ENCODE measurements at regions of chr16 and their contacts with region 1.

Region 1: DNA sequence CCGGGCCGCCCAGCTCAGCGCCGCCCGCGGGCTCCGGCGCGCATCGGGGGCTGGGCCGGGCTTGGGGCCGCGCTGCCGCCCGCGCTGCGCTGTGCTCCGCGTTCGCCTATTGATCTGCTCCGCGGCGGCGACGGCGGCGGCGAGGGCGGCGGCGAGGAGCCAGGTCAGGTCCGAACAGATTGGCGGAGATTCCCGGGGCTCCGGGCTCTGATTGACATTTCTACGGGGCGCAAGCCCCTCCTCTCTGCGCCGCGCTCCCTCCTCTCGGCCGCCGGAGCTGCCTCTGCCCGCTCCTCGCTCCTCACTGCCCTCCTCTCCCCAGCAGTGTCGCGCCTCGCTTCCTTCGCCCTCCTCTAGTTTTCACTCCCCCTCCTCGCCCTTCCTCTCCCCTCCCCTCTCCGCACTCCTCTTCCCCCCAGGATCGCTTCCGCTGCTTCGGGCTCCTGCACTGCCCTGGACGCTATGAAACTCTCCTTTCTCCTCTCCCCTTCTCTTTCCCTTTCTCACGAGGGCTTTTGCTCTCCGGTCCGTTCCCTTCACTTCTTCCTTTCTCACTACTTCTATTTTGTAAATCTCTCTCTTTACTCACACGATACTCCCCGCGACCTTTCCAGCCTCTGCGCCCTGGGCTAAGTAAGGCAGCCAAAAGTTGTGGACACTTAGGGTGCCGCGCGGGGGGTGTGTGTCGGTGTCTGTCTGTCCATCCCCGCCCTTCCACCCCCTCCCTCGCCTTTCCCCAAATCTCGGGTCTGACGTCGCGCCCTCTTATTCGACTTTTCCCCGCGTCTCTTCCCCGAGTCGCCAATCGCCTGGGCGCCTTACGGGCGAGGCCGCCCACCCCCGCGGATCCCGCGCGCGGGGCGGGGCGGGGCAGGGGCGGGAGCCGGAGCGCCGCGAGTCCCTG is at the start of gene IRX3:
- DNase-seq: no peak
- H3K4me3 ChIP-seq: peak within 1 kb of the TSS; percentile 61 to 67
- H3K27ac ChIP-seq: peak within 1 kb of the TSS; percentile 77
- H3K4me1 ChIP-seq: peaks cover 44% of the 10 kb centered on the region
- H3K27me3 ChIP-seq: peaks cover 5% of the 10 kb centered on the region
- CTCF ChIP-seq: no peak
- POLR2A ChIP-seq: no peak
- total RNA-seq, gene IRX3: 16.5 TPM

Region 2: GRCh38 chr16:53549970-53550690 is 736.2 kb before region 1 on chr16:
- intact Hi-C with region 1: loop called (anchors 10 kb)
- DNase-seq: no peak
- H3K4me3 ChIP-seq: no peak overlapping the region
- H3K27ac ChIP-seq: no peak overlapping the region
- H3K4me1 ChIP-seq: no peaks in the 10 kb centered on the region
- H3K27me3 ChIP-seq: no peaks in the 10 kb centered on the region
- CTCF ChIP-seq: peak; percentile 17 to 53 (median 48)
- POLR2A ChIP-seq: no peak

Region 3: DNA sequence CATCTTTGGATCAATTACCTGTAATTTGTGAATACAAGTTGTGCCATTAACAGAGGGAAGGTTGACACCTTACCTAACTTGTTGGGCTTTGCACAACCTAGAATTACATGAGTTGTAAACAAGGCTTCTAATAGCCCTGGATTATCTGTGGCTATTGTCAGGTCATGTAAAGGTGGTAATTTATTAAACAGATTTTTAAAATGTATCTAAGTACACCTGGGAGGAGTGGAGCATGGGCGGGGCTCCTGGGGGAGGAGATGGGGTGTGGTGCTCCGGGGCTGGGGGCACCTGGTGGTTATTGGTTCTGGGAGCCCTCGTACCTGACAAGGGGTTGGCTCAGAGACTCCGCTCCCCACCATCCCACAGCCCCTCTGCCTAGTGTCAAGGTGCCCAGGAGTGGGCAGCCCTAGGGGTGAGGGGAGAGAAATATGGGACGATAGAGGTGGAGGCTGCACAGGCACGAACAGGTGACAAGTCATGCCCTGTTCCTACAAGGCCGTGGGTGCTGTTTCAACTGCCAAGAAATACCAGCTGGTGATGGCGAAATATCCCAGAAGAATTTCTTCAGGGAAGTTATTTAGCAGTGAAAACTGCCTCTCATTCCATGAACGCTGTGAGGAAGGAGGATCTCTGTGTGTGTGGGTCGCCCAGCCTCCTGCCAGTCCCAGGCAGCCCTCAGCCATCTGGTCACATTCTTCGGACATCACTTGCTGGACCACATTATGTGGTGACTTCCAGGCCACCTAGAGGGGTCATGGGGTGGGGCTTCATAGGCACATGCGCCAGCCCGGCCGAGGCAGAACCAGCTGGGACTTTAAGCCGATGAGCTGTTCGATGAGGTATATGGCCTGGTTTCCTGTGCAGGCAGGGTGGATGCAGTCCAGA is 55.8 kb after region 1 on chr16:
- intact Hi-C with region 1: no loop called
- DNase-seq: no peak
- H3K4me3 ChIP-seq: no peak overlapping the region
- H3K27ac ChIP-seq: no peak overlapping the region
- H3K4me1 ChIP-seq: peaks cover 12% of the 10 kb centered on the region
- H3K27me3 ChIP-seq: no peaks in the 10 kb centered on the region
- CTCF ChIP-seq: no peak
- POLR2A ChIP-seq: no peak

Region 4: DNA sequence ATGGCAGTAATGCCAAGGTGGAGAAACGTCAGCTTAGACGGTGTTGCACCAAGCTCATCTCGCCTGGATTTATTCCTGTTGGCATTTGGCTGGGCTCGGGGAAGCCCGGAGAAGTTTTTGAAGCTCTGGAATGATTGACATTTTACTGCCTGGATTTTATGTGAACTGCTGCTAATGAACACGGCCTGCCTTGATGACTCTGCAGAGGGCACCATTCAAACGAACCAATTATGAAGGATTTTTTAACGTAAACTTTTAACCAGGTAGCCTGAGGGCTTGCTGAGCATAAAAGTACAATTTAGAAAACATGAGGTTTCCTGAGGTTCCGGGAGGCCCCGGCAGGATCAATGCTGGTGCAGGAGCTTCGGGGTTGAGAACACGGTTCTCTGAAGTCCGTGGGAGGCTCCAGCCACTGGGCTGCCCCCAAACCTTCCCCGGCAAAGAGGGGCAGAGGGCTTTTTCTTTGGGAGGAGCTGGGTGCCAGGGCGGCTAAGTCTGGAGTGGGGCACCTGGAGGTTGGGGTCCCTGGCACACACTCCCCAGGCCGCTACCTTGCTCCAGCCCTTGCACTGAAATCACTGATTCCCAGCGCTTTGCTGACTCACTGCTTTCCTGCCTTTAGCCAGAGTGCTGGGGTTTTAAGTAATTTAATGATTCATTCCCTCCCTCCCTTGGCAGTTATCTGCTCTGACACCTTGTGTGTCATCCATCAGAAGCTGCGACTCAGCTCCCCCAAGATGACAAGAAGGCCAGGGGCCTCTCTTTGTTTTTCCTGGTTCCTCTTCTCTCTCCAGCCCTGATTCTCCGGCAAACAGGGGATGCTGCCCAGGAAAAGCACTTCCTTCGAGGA is 161.5 kb after region 1 on chr16:
- intact Hi-C with region 1: loop called (anchors 10 kb)
- DNase-seq: no peak
- H3K4me3 ChIP-seq: no peak overlapping the region
- H3K27ac ChIP-seq: no peak overlapping the region
- H3K4me1 ChIP-seq: peaks cover 20% of the 10 kb centered on the region
- H3K27me3 ChIP-seq: no peaks in the 10 kb centered on the region
- CTCF ChIP-seq: no peak
- POLR2A ChIP-seq: no peak

Region 5: GRCh38 chr16:54929090-54930004 is 643.0 kb after region 1 on chr16:
- intact Hi-C with region 1: loop called (anchors 5 kb)
- DNase-seq: peak in 1 of 2 donors; percentile 96
- H3K4me3 ChIP-seq: peak overlapping the region; percentile 50 to 55
- H3K27ac ChIP-seq: peak overlapping the region; percentile 77
- H3K4me1 ChIP-seq: peaks cover 11% of the 10 kb centered on the region
- H3K27me3 ChIP-seq: peaks cover 10% of the 10 kb centered on the region
- CTCF ChIP-seq: no peak
- POLR2A ChIP-seq: no peak